ENCODE measurements at regions of chr9 and their contacts with region 1.

Region 1: DNA sequence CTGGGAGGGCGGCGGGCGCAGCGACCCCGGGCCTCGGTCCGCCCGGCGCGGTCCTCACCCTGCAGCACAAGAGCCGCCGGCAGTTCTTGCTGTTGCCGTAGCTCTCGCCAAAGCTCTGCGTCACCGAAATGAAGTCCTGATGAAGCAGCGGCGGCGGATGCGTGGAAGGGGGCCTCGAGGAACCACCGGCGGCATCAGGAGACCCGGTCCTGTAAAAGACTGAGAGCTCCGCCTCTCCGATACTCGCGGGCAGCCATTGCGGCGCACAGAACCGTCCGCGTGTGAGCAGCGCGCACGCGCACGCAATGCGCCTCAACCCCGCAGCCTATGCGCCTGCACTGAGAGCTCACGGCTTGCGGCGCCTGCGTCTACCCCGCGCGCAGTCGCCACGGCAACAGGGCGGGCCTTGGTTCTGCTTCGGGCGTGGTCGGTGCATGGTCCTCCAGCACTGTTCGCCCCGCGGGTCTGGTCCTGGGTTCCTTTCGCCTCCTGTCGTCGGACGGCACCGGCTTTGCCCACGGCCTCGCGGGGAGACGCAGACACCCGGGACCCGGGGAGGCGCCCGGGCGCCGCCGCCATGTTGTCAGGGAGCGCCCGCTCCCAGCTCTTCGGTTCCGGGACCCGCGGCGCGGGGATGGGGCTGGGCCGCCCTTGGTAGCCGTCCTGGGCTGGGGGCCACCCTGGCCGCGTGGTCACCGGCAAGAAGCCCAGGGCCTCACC is 9.3 kb upstream of the GRIN1 start:
- DNase-seq: peak; percentile 72 to 98 (median 88)

Region 2: GRCh38 chr9:137034863-137035761 is 94.5 kb before region 1 on chr9:
- intact Hi-C with region 1: no loop called
- DNase-seq: peak; percentile 80 to 99 (median 88)

Region 3: GRCh38 chr9:137168905-137169856 is 39.6 kb after region 1 on chr9:
- intact Hi-C with region 1: loop called (anchors 5 kb)
- DNase-seq: peak in 8 of 10 donors; percentile 58 to 95 (median 79)

Region 4: GRCh38 chr9:137217276-137218211 is 87.9 kb after region 1 on chr9:
- intact Hi-C with region 1: no loop called
- DNase-seq: peak in 2 of 10 donors; percentile 15 to 91